ENCODE measurements at regions of chr1 and their contacts with region 1.

Region 1: GRCh38 chr1:243343970-243344937 is 88.4 kb downstream of the SDCCAG8 start:
- DNase-seq: no peak
- ATAC-seq: peak; percentile 88

Region 2: GRCh38 chr1:243748706-243749283 is 404.5 kb after region 1 on chr1:
- intact Hi-C with region 1: loop called in 1 of 2 experiments (anchors 10 kb)
- DNase-seq: no peak
- ATAC-seq: peak; percentile 83

Region 3: GRCh38 chr1:243806310-243806709 is 462.1 kb after region 1 on chr1:
- intact Hi-C with region 1: no loop called
- DNase-seq: no peak
- ATAC-seq: no peak

Region 4: GRCh38 chr1:244272471-244273261 is 928.4 kb after region 1 on chr1:
- intact Hi-C with region 1: loop called (anchors 2 to 10 kb)
- DNase-seq: peak; percentile 30 to 64
- ATAC-seq: peak; percentile 90

Measured in left colon (tissue), 2 donors.